ENCODE measurements at regions of chr11 and their contacts with region 1.

Region 1: DNA sequence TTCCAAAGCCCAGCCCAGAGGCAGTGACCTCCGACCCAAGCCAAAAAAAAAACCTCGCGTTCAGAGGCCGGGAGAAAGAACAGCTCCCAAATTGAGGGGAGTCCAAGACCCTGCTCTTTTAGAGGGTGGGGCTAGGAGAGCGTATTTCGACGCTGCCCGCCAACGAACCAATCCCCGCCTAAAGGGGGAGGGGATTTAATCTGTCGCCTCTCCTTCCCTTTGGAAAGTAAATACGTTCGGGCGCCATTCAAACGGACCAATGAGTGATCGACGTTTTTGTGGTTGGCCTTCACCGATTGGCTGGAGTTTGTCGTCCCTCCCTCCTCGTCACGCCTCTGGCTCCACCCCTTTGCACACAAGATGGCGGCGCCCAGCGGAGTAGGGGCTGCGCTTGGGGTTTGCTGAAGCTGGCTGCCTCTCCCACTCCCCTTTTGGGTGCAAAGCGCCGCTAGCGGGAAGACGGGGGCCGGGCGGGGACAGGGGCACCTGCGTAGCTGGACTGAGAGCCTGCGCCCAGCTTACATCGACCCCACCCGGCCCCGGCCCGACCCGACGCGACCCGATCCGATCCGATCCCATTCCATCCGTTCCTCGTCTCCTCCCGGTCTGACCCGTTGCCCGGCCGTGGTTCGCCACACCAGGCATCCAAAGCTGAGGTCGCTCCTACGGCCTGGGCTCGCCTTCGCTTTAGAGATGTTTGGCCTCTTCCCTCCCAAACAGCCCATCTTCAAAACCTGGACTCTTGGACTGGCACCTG is at the start of gene RNF26:
- DNase-seq: peak; percentile 97
- ATAC-seq: peak; percentile 95
- H3K4me3 Mint-ChIP-seq: peak within 1 kb of the TSS; percentile 98
- H3K27ac Mint-ChIP-seq: peak within 1 kb of the TSS; percentile 99
- H3K4me1 Mint-ChIP-seq: peaks cover 44% of the 10 kb centered on the region
- H3K27me3 Mint-ChIP-seq: peaks cover 9% of the 10 kb centered on the region
- CTCF ChIP-seq: no peak
- total RNA-seq, gene RNF26: 30.2 to 31.9 TPM

Region 2: DNA sequence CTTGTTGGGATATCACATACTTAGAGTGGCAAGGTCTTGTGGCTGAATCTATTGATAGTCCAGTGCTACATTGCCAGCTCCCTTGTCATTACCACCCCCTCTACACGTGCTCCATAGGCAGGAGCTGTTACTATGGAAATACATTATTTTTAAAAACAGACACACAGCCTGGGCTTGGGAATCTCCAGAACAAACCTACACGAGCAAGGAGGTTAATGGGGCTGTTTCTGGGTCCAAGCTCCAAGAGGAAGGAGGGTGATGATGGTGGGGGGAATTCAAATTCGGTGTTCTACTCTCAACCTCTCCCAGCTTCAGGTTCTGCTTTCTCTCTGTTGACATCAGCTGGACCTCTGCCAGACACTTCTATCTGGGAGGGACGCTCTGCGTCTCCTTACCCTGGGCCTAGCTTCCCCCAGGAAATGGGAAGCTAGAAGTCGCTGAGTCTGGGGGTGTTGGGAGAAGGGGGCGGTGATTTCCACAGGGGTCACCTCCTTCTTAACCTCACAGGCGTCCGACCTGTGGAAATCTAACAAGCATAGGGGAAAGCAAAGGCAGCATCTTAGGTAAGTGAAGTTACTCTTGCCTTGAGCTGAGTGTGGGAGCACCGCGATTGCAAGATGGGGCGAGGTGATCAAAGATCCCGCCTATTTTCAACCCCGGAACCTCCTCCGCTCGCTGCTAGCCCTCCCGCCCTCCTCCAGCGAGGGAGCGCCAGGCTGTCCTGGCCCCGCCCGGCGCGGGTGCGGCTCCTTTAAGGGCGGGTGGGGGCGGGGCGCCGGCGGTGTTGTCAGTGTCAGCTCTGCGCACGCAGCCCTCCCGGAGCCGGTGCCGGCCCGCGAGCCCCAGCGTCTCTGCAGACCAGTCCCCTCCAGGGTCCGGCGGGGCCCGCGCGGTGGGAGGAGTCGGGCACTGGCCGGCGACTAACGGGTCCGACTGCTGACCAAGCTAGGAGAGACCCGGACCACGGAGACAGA is 227.5 kb before region 1 on chr11 and contains the start of gene C2CD2L:
- CTCF ChIA-PET with region 1: no interaction called
- POLR2A ChIA-PET with region 1: no interaction called
- intact Hi-C with region 1: no loop called
- DNase-seq: peak; percentile 94
- ATAC-seq: peak; percentile 91
- H3K4me3 Mint-ChIP-seq: peak within 1 kb of the TSS; percentile 85
- H3K27ac Mint-ChIP-seq: peak within 1 kb of the TSS; percentile 95
- H3K4me1 Mint-ChIP-seq: peaks cover 37% of the 10 kb centered on the region
- H3K27me3 Mint-ChIP-seq: no peaks in the 10 kb centered on the region
- CTCF ChIP-seq: no peak
- total RNA-seq, gene C2CD2L: 14.2 to 17.7 TPM

Region 3: DNA sequence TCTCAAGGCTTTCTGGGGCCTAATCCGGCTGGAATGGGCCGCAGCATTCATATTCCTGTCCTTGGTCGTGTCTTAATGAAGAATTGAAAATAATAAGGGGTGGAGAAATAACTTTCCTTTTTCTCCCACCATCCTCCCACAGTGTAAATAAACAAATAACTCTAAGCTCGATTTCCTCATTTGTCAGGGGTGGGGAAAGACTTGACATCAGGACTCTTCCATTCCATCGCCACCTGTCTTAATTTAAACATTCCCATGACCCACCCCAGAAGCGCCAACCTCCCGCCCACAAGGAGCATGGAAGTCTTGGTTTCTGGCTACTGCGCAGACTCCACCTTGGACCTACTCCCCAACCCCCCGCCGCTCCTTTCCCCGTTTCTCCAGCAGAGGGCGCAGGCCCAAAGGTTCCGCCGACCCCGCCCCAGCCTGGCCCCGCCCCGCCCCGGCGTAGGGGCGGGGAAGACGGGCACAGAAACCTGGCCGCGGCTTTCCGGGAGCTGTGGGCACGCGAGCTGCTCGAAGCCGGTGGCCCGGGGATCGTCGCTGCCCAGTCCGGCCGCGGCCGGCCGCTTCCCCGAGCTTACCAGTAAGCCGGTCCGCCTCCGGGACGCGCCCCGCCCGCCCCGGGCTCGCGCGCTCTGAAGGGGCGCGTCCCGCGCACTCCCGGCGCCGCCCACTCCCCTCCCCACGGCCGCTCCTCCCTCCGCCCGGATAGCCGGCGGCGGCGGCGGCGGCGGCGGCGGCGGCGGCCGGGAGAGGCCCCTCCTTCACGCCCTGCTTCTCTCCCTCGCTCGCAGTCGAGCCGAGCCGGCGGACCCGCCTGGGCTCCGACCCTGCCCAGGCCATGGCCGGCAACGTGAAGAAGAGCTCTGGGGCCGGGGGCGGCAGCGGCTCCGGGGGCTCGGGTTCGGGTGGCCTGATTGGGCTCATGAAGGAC is 128.5 kb before region 1 on chr11 and contains the start of gene CBL:
- CTCF ChIA-PET with region 1: interaction called, 21 read pairs
- POLR2A ChIA-PET with region 1: no interaction called
- intact Hi-C with region 1: loop called (anchors 10 kb)
- DNase-seq: peak; percentile 97
- ATAC-seq: peak; percentile 91
- H3K4me3 Mint-ChIP-seq: peak within 1 kb of the TSS; percentile 90
- H3K27ac Mint-ChIP-seq: peak within 1 kb of the TSS; percentile 93
- H3K4me1 Mint-ChIP-seq: peaks cover 23% of the 10 kb centered on the region
- H3K27me3 Mint-ChIP-seq: no peaks in the 10 kb centered on the region
- CTCF ChIP-seq: peak; percentile 84
- total RNA-seq, gene CBL: 27.0 to 27.5 TPM

Region 4: DNA sequence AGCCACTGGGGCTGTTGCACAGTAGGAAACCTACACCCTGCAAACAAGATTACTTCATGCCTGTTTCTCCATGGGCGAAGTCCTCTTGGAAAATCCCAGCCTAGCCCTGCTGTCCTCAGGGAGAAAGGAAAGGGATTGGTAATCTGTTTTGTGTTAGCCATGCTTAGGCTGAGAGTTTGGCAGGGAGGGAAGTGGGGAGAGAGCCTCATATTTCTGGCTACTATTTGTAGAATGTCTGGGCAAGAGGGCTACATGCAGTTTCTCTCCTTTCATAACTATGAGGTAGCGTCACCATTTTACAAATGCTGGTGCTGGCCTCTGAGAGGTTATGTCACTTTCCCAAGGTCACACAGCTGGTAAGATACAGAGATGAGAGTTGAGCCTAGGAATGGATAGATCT is 12.9 kb after region 1 on chr11:
- CTCF ChIA-PET with region 1: interaction called, 19 read pairs
- POLR2A ChIA-PET with region 1: interaction called, 6 read pairs
- intact Hi-C with region 1: no loop called
- DNase-seq: no peak
- ATAC-seq: no peak
- H3K4me3 Mint-ChIP-seq: no peak overlapping the region
- H3K27ac Mint-ChIP-seq: no peak overlapping the region
- H3K4me1 Mint-ChIP-seq: peaks cover 6% of the 10 kb centered on the region
- H3K27me3 Mint-ChIP-seq: peaks cover 18% of the 10 kb centered on the region
- CTCF ChIP-seq: no peak

Region 5: GRCh38 chr11:119373921-119374631 is 39.7 kb after region 1 on chr11:
- CTCF ChIA-PET with region 1: interaction called, 26 read pairs
- POLR2A ChIA-PET with region 1: no interaction called
- intact Hi-C with region 1: no loop called
- DNase-seq: peak; percentile 56
- ATAC-seq: peak; percentile 75
- H3K4me3 Mint-ChIP-seq: no peak overlapping the region
- H3K27ac Mint-ChIP-seq: no peak overlapping the region
- H3K4me1 Mint-ChIP-seq: peaks cover 7% of the 10 kb centered on the region
- H3K27me3 Mint-ChIP-seq: peaks cover 6% of the 10 kb centered on the region
- CTCF ChIP-seq: peak; percentile 91

Region 6: GRCh38 chr11:119474682-119475596 is 140.6 kb after region 1 on chr11:
- CTCF ChIA-PET with region 1: interaction called, 14 read pairs
- POLR2A ChIA-PET with region 1: no interaction called
- intact Hi-C with region 1: no loop called
- DNase-seq: peak; percentile 72
- ATAC-seq: peak; percentile 91
- H3K4me3 Mint-ChIP-seq: no peak overlapping the region
- H3K27ac Mint-ChIP-seq: no peak overlapping the region
- H3K4me1 Mint-ChIP-seq: no peaks in the 10 kb centered on the region
- H3K27me3 Mint-ChIP-seq: peaks cover 19% of the 10 kb centered on the region
- CTCF ChIP-seq: peak; percentile 82

Region 7: DNA sequence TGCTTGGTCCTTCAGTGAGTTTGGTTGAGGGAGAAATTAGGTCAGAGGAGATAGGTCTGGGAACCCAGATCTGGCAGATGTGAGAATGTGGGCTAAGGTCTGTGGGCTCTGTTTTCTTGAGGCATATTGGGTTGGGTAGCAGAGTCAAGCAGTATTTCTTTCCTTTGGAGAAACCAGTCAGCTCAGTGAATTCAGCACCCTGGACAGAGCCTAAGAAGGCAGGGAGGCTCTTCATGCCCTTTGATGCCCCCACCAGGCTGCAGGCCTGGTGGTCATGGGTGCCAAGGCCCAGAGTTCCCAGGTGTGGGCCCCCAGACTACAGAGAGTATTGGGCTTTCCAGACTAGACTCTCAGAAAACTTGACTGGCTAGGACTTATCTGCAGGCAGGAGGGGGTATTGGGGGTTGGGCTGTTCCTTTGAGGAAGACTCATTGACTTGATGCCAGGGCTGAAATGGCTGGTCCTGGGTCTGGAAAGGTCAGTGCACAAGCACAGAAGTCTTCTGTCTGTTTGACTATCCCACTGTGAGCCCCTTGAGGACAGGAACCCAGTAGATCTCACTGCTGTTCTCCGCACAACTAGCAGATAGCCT is 439.9 kb after region 1 on chr11:
- CTCF ChIA-PET with region 1: no interaction called
- POLR2A ChIA-PET with region 1: no interaction called
- intact Hi-C with region 1: no loop called
- DNase-seq: peak; percentile 37
- ATAC-seq: no peak
- H3K4me3 Mint-ChIP-seq: no peak overlapping the region
- H3K27ac Mint-ChIP-seq: no peak overlapping the region
- H3K4me1 Mint-ChIP-seq: no peaks in the 10 kb centered on the region
- H3K27me3 Mint-ChIP-seq: peaks cover 9% of the 10 kb centered on the region
- CTCF ChIP-seq: no peak

Measured in activated CD8-positive, alpha-beta T cell treated with anti-CD3 and anti-CD28 coated beads for 36 hours (primary cell).